Esophagus muscularis mucosa (tissue), 4 donors: ENCODE measurements at regions of chr2 and their contacts with region 1.

Region 1: GRCh38 chr2:161223139-161223732 is 63.0 kb downstream of the TANK start:
- DNase-seq: no peak
- H3K4me3 ChIP-seq: no peak overlapping the region
- H3K27ac ChIP-seq: no peak overlapping the region
- H3K4me1 ChIP-seq: peaks cover 0 to 10% (median 3%) of the 10 kb centered on the region in 4 donors
- H3K27me3 ChIP-seq: no peaks in the 10 kb centered on the region
- CTCF ChIP-seq: peak; percentile 71 to 81 (median 74)
- EP300 ChIP-seq: no peak
- POLR2A ChIP-seq: no peak

Region 2: GRCh38 chr2:161250864-161251436 is 27.7 kb after region 1 on chr2:
- intact Hi-C with region 1: no loop called
- DNase-seq: no peak
- H3K4me3 ChIP-seq: no peak overlapping the region
- H3K27ac ChIP-seq: no peak overlapping the region
- H3K4me1 ChIP-seq: no peaks in the 10 kb centered on the region
- H3K27me3 ChIP-seq: peaks cover 0 to 12% (median 0%) of the 10 kb centered on the region in 4 donors
- CTCF ChIP-seq: peak; percentile 23 to 61 (median 45)
- EP300 ChIP-seq: no peak
- POLR2A ChIP-seq: no peak

Region 3: DNA sequence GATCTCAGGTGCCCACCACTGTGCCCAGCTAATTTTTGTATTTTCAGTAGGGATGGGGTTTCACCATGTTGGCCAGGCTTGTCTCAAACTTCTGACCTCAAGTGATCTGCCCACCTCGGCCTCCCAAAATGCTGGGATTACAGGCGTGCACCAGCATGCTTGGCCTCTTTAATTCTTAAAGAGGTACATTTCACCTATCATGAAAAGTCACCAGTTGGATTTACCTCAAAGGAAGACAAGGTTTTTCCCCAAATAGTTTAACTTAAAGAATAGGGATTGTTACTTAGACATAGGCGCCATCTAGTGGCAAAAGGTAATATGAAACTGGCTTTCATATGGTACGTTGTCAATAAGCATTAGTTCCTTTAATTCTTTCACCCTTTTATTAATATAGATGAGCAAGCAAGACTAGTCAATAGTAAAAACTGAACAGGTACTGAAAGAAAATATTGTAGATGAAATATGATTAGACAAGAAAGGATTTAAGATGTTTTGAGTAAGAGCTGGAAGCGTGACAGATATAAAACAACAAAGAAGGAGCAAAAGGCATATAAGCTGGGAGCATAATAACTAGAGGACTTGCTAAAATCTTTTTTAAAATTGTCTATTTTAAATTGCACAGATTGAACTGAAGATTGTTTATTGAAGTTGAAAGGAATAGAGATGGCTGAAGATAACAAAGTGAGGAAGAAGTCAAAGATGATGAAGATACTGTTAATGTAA is 50.0 kb after region 1 on chr2:
- intact Hi-C with region 1: loop called (anchors 2 kb)
- DNase-seq: no peak
- H3K4me3 ChIP-seq: no peak overlapping the region
- H3K27ac ChIP-seq: no peak overlapping the region
- H3K4me1 ChIP-seq: no peaks in the 10 kb centered on the region
- H3K27me3 ChIP-seq: no peaks in the 10 kb centered on the region
- CTCF ChIP-seq: peak; percentile 53 to 72 (median 66)
- EP300 ChIP-seq: no peak
- POLR2A ChIP-seq: no peak

Region 4: DNA sequence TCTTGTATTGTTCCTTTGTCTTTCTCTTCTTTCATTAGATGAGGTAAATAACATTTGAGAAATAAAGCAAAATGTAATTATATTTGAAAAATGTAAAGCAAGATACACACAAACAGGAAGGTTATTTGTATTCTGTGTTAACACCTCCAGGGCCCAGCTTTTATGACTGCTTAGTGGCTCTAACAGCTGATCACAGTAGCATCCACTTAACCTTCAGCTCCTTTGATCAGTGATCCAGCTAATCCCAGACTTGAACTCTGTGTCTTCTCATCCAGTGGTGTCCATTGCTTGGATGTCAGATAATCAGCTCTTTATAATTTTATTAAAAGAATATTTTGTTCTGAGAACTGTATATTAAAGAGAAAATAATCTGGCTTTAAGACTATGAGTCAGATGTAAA is 129.5 kb after region 1 on chr2:
- intact Hi-C with region 1: no loop called
- DNase-seq: no peak
- H3K4me3 ChIP-seq: no peak overlapping the region
- H3K27ac ChIP-seq: no peak overlapping the region
- H3K4me1 ChIP-seq: peaks cover 0 to 39% (median 14%) of the 10 kb centered on the region in 4 donors
- H3K27me3 ChIP-seq: no peaks in the 10 kb centered on the region
- CTCF ChIP-seq: no peak
- EP300 ChIP-seq: no peak
- POLR2A ChIP-seq: no peak